ENCODE measurements at regions of chr3 and their contacts with region 1.

Region 1: DNA sequence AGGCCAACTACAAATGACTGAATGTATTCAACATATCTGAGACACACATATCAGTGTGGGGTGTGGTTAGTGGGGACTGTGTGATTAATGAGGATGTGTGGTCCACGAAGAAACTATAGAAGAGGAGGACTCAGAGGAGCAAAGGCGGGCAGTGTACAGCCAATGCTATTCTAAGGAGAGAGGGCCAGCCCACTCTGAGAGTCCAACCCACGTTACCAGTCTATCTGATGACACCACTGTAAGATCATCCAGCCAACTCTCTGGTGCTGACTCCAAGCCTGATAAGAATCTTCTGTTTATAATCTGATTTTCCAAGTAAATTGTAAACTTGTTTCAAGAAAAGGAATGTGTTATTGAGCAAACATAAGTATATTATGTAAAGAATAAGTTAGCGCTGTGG is 47.2 kb downstream of the MCF2L2 start:
- DNase-seq: no peak
- ATAC-seq: peak; percentile 82
- H3K4me3 ChIP-seq: no peak overlapping the region
- H3K27ac ChIP-seq: no peak overlapping the region
- H3K4me1 ChIP-seq: peaks cover 7% of the 10 kb centered on the region
- H3K27me3 ChIP-seq: no peaks in the 10 kb centered on the region
- CTCF ChIP-seq: no peak

Region 2: DNA sequence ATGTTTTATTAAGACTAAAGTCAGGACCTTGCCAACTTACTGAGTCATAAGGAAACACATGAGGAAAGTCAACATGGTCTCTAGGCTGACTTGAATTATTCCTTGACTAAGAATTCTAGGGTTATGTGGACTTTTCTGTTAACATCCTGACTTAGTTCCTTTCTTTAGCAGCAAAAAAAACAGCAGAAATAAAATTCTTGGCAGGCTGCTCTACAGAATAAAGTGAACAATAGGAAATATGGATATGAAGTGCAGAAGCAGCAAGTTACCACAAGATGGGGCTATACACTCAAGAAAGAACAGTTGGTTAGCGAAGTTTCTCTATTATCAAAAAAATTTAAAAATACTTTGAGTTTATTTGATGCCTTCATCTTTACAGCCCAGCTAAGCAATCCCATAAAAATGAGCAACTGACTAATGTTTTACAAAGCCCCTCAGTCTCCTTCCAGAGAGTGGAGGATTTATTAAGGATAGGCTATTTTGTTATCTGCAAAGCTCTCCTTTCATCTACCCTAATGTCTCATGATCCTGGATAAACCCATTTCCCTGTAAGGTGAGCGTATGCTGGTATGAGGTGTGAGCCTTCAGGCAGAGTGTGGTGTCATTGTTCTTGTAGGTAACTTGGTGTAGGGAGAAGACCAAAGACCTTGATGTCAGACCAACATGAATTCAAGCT is 258.8 kb before region 1 on chr3:
- intact Hi-C with region 1: loop called (anchors 5 kb)
- DNase-seq: no peak
- ATAC-seq: peak; percentile 81
- H3K4me3 ChIP-seq: no peak overlapping the region
- H3K27ac ChIP-seq: no peak overlapping the region
- H3K4me1 ChIP-seq: no peaks in the 10 kb centered on the region
- H3K27me3 ChIP-seq: peaks cover under 1% of the 10 kb centered on the region
- CTCF ChIP-seq: peak; percentile 91

Region 3: GRCh38 chr3:183180105-183180783 is 200.9 kb before region 1 on chr3:
- intact Hi-C with region 1: loop called (anchors 5 kb)
- DNase-seq: no peak
- ATAC-seq: no peak
- H3K4me3 ChIP-seq: peak overlapping the region; percentile 54
- H3K27ac ChIP-seq: no peak overlapping the region
- H3K4me1 ChIP-seq: peaks cover 12% of the 10 kb centered on the region
- H3K27me3 ChIP-seq: peaks cover 30% of the 10 kb centered on the region
- CTCF ChIP-seq: no peak

Region 4: DNA sequence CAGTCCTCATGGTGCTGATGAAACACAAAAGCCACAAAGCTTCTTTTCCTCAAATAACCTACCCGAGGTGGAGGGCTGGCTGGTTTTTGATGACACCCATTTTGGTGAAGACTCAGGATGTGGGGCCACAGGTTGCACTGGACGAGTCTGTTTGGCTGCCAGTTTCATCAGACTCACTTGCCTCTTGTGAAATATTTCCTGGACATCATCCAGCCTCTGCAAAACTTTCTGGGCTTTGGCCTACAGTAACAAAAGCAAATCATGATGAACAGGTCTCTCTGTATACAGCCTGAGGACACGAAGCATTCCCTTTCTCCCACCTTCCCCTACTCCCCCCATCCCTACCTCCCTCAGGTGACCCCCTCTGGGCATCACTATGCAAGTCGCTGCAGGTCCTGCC is 85.9 kb before region 1 on chr3:
- intact Hi-C with region 1: no loop called
- DNase-seq: no peak
- ATAC-seq: peak; percentile 55
- H3K4me3 ChIP-seq: no peak overlapping the region
- H3K27ac ChIP-seq: no peak overlapping the region
- H3K4me1 ChIP-seq: peaks cover 5% of the 10 kb centered on the region
- H3K27me3 ChIP-seq: no peaks in the 10 kb centered on the region
- CTCF ChIP-seq: no peak

Measured in upper lobe of right lung (tissue), 1 donor.